ENCODE measurements at regions of chr2 and their contacts with region 1.

Region 1: GRCh38 chr2:177164584-177165052 is 48.0 kb upstream of the HNRNPA3 start:
- DNase-seq: peak; percentile 63
- H3K4me3 Mint-ChIP-seq: no peak overlapping the region
- H3K27ac Mint-ChIP-seq: no peak overlapping the region
- H3K4me1 Mint-ChIP-seq: peaks cover 25% of the 10 kb centered on the region
- H3K27me3 Mint-ChIP-seq: peaks cover 3% of the 10 kb centered on the region

Region 2: GRCh38 chr2:177296040-177296439 is 131.4 kb after region 1 on chr2:
- intact Hi-C with region 1: loop called (anchors 1 kb)
- DNase-seq: no peak
- H3K4me3 Mint-ChIP-seq: no peak overlapping the region
- H3K27ac Mint-ChIP-seq: peak overlapping the region; percentile 1
- H3K4me1 Mint-ChIP-seq: peaks cover 47% of the 10 kb centered on the region
- H3K27me3 Mint-ChIP-seq: peaks cover 2% of the 10 kb centered on the region

Region 3: GRCh38 chr2:177392373-177393202 is 228.0 kb after region 1 on chr2 and contains the start of gene AGPS:
- intact Hi-C with region 1: loop called (anchors 2 kb)
- DNase-seq: peak; percentile 80
- H3K4me3 Mint-ChIP-seq: peak within 1 kb of the TSS; percentile 90
- H3K27ac Mint-ChIP-seq: peak within 1 kb of the TSS; percentile 92
- H3K4me1 Mint-ChIP-seq: peaks cover 58% of the 10 kb centered on the region
- H3K27me3 Mint-ChIP-seq: no peaks in the 10 kb centered on the region
- total RNA-seq, gene AGPS: 70.1 and 71.8 TPM in 2 replicates

Region 4: DNA sequence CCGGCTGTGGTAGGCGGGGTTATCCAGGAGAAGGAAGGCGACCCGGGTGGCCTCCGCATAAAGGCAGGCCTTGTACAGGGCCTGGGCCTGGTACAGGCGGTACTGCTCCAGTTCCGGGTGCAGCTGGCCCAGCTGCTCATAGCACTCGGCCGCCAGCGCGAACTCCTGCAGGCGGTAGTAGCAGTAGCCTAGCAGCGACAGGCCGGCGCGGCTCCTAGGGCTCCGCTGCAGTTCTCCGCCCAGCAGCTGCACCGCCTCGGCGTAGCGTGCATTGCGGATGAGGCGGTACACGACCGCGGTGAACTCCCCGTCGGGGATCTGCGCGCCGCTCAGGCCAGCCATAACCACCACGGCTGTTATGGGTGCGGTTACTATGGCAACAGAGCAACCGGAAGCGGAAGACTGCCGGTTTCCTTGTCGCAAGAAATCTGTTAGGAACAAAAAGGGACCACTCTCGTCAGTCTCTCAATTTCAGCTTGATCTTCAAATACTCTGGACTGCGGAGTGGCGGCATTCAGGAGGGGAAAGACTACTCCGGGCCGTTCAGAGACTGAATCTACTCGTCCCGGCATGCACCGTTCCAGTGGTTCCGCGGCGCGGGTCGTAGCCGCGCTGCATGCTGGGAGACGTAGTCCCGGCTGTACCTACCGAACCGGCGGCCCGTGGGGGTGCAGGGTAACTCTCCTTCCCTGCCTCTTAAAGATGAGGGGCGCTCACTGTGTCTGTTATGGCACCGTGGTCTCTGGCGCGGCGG is 388.0 kb after region 1 on chr2:
- intact Hi-C with region 1: loop called (anchors 10 kb)
- DNase-seq: peak; percentile 88
- H3K4me3 Mint-ChIP-seq: peak overlapping the region; percentile 95
- H3K27ac Mint-ChIP-seq: peak overlapping the region; percentile 100
- H3K4me1 Mint-ChIP-seq: peaks cover 16% of the 10 kb centered on the region
- H3K27me3 Mint-ChIP-seq: no peaks in the 10 kb centered on the region

Region 5: DNA sequence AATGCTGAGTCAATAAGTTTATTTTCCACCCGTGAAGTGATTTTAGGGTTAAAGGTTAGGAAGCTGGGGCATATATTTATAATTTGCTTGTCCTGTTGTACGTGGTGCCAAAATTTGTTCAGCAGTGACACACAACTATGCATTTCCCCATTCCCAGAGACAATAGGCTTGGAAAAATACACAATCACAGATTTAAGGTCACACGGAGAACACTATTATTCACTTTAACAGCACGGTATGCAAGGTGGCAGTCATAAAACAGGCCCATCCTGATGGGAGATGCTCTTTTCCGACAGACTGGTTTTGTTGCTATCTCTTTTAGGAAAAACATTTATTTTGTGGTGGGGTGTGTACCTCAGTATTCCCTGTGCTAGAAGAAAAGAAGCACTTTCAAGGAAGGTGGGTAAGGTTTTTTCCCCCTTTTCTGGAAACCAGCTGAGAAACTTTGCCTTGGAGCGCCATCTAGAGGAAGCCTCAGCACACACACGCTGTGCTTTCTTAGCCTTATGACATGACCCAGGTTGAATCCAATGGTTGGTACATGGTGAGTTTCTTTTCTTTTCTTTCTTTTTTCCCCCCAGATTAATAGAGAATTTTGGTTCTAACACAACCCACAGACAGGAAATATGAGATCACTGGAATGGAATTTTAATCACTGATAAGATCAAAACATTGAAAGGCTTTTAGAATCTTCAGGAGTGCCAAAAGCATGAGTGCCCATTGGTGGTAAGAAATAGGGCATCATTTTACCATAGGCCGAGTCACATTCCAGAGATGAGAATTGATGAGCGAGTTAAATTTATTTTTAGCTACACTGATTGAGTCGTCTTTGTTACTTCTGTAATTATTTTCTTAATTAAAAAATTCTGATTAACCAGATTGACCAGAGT is 560.0 kb after region 1 on chr2:
- intact Hi-C with region 1: loop called (anchors 2 kb)
- DNase-seq: peak; percentile 16
- H3K4me3 Mint-ChIP-seq: no peak overlapping the region
- H3K27ac Mint-ChIP-seq: no peak overlapping the region
- H3K4me1 Mint-ChIP-seq: no peaks in the 10 kb centered on the region
- H3K27me3 Mint-ChIP-seq: peaks cover 24% of the 10 kb centered on the region

Measured in activated T-helper 1 cell treated with anti-CD3 and anti-CD28 coated beads, Interleukin-12 subunit alpha, Interleukin-12 subunit beta, Interleukin-2, Interleukin-4 antibody, amounts not matched to agents 30 ng/mL and 10 ng/mL and 1 ng/mL, durations not matched to agents 14 hours and 24 hours and 36 hours (primary cell).